Transverse colon (tissue), 4 donors: ENCODE measurements at regions of chr15 and their contacts with region 1.

Region 1: GRCh38 chr15:57306161-57306943 is 70.0 kb upstream of the CGNL1 start:
- DNase-seq: peak; percentile 92
- H3K4me3 ChIP-seq: peak overlapping the region; percentile 36 to 62 (median 42)
- H3K27ac ChIP-seq: peak overlapping the region; percentile 46 to 80 (median 60)
- H3K4me1 ChIP-seq: peaks cover 9 to 37% (median 21%) of the 10 kb centered on the region in 4 donors
- H3K27me3 ChIP-seq: no peaks in the 10 kb centered on the region
- CTCF ChIP-seq: peak; percentile 90 to 91 (median 90)
- EP300 ChIP-seq: no peak
- POLR2A ChIP-seq: no peak

Region 2: DNA sequence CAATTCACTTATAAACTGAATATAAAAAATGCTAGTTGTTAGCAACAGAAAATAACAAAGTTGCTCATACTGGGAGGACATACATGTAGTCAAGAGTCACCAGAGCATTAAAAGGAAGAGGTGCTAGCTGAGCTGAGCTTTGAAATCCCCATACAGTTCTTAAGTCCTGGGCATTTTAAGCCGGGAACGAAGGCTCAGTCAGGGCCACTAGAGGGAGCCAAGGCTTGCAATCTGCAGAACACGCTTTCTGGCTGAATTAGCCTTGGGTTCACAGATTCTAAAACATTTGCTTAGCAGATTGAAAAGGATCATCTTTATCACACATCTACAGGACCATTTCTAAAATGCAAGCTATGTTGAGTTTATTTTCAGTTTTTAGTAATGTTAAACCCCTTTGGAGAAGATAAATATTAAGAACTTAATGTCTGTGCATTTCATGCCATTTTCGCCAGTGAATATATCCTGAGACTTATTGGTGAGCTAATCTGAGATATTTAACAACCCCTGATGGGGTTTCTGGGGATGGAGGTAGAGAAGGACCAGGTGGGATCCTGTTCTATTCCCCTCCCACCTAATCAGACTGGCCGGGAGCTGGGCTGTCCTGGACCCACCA is 815.1 kb before region 1 on chr15:
- in situ Hi-C with region 1: loop called (anchors 10 to 25 kb)
- intact Hi-C with region 1: no loop called
- DNase-seq: peak; percentile 74
- H3K4me3 ChIP-seq: no peak overlapping the region
- H3K27ac ChIP-seq: no peak overlapping the region
- H3K4me1 ChIP-seq: peaks cover 0 to 23% (median 0%) of the 10 kb centered on the region in 4 donors
- H3K27me3 ChIP-seq: no peaks in the 10 kb centered on the region
- CTCF ChIP-seq: peak; percentile 66 to 81 (median 73)
- EP300 ChIP-seq: no peak
- POLR2A ChIP-seq: no peak

Region 3: GRCh38 chr15:56821721-56822425 is 484.5 kb before region 1 on chr15:
- in situ Hi-C with region 1: loop called in 1 of 4 experiments (anchors 25 kb)
- intact Hi-C with region 1: no loop called
- DNase-seq: peak; percentile 70
- H3K4me3 ChIP-seq: no peak overlapping the region
- H3K27ac ChIP-seq: no peak overlapping the region
- H3K4me1 ChIP-seq: peaks cover 0 to 7% (median 0%) of the 10 kb centered on the region in 4 donors
- H3K27me3 ChIP-seq: no peaks in the 10 kb centered on the region
- CTCF ChIP-seq: peak; percentile 63 to 73 (median 70)
- EP300 ChIP-seq: no peak
- POLR2A ChIP-seq: no peak

Region 4: GRCh38 chr15:56886932-56887781 is 419.2 kb before region 1 on chr15:
- in situ Hi-C with region 1: loop called in 1 of 4 experiments (anchors 25 kb)
- intact Hi-C with region 1: no loop called
- DNase-seq: peak; percentile 95
- H3K4me3 ChIP-seq: peak overlapping the region; percentile 64 to 82 (median 66)
- H3K27ac ChIP-seq: peak overlapping the region; percentile 97 to 99 (median 98)
- H3K4me1 ChIP-seq: peaks cover 11 to 22% (median 17%) of the 10 kb centered on the region in 4 donors
- H3K27me3 ChIP-seq: no peaks in the 10 kb centered on the region
- CTCF ChIP-seq: no peak
- EP300 ChIP-seq: no peak
- POLR2A ChIP-seq: peak; percentile 91

Region 5: GRCh38 chr15:57290187-57290586 is 16.2 kb before region 1 on chr15:
- in situ Hi-C with region 1: no loop called
- intact Hi-C with region 1: no loop called
- DNase-seq: no peak
- H3K4me3 ChIP-seq: no peak overlapping the region
- H3K27ac ChIP-seq: no peak overlapping the region
- H3K4me1 ChIP-seq: no peaks in the 10 kb centered on the region
- H3K27me3 ChIP-seq: no peaks in the 10 kb centered on the region
- CTCF ChIP-seq: no peak
- EP300 ChIP-seq: no peak
- POLR2A ChIP-seq: no peak